ENCODE measurements at regions of chr19 and their contacts with region 1.

Region 1: GRCh38 chr19:40150170-40150569 is 41.1 kb upstream of the MAP3K10 start:
- DNase-seq: peak; percentile 29 to 78
- H3K4me3 ChIP-seq: no peak overlapping the region
- CTCF ChIP-seq: no peak
- POLR2A ChIP-seq: no peak

Region 2: GRCh38 chr19:40165362-40165937 is 15.3 kb after region 1 on chr19:
- intact Hi-C with region 1: loop called (anchors 2 kb)
- DNase-seq: peak; percentile 28 to 91
- H3K4me3 ChIP-seq: no peak overlapping the region
- CTCF ChIP-seq: peak in 1 of 3 donors; percentile 26
- POLR2A ChIP-seq: no peak